ENCODE measurements at regions of chr15 and their contacts with region 1.

Region 1: DNA sequence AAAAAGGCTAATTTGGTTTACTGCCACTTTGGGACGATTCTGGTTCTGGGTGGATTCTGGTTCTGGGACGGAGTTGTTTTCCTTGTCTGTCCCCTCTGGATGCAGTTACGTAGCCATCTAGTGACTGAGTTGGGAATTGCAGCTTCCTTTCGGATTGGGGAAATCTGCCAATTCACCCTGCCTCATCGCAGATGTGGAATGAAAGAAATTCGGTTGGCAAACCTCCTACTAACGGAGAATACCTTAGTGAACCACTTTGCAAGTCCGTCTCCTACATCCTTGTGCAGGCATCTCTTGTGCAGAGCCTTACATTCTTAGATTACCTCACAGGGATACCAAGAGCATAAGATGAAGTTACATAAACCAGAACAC is 31.5 kb upstream of the AP4E1 start:
- DNase-seq: peak; percentile 38 to 74 (median 61)
- ATAC-seq: peak; percentile 72 to 84
- H3K4me3 ChIP-seq: peak overlapping the region; percentile 42
- H3K27ac ChIP-seq: no peak overlapping the region
- H3K4me1 ChIP-seq: no peaks in the 10 kb centered on the region
- H3K27me3 ChIP-seq: no peaks in the 10 kb centered on the region

Region 2: GRCh38 chr15:50627351-50628055 is 249.5 kb before region 1 on chr15:
- intact Hi-C with region 1: no loop called
- DNase-seq: no peak
- ATAC-seq: no peak
- H3K4me3 ChIP-seq: no peak overlapping the region
- H3K27ac ChIP-seq: no peak overlapping the region
- H3K4me1 ChIP-seq: no peaks in the 10 kb centered on the region
- H3K27me3 ChIP-seq: no peaks in the 10 kb centered on the region

Region 3: GRCh38 chr15:50641288-50641687 is 235.7 kb before region 1 on chr15:
- intact Hi-C with region 1: no loop called
- DNase-seq: no peak
- ATAC-seq: no peak
- H3K4me3 ChIP-seq: no peak overlapping the region
- H3K27ac ChIP-seq: no peak overlapping the region
- H3K4me1 ChIP-seq: no peaks in the 10 kb centered on the region
- H3K27me3 ChIP-seq: no peaks in the 10 kb centered on the region

Region 4: GRCh38 chr15:50669611-50670010 is 207.4 kb before region 1 on chr15:
- intact Hi-C with region 1: loop called in 3 of 4 experiments (anchors 2 to 10 kb)
- DNase-seq: no peak
- ATAC-seq: no peak
- H3K4me3 ChIP-seq: no peak overlapping the region
- H3K27ac ChIP-seq: no peak overlapping the region
- H3K4me1 ChIP-seq: peaks cover 1% of the 10 kb centered on the region
- H3K27me3 ChIP-seq: no peaks in the 10 kb centered on the region

Region 5: GRCh38 chr15:50675536-50676144 is 201.3 kb before region 1 on chr15:
- intact Hi-C with region 1: loop called (anchors 2 to 10 kb)
- DNase-seq: no peak
- ATAC-seq: no peak
- H3K4me3 ChIP-seq: no peak overlapping the region
- H3K27ac ChIP-seq: no peak overlapping the region
- H3K4me1 ChIP-seq: peaks cover 3% of the 10 kb centered on the region
- H3K27me3 ChIP-seq: no peaks in the 10 kb centered on the region

Region 6: GRCh38 chr15:50681467-50681866 is 195.5 kb before region 1 on chr15:
- intact Hi-C with region 1: loop called in 3 of 4 experiments (anchors 5 to 10 kb)
- DNase-seq: no peak
- ATAC-seq: no peak
- H3K4me3 ChIP-seq: no peak overlapping the region
- H3K27ac ChIP-seq: no peak overlapping the region
- H3K4me1 ChIP-seq: peaks cover 9% of the 10 kb centered on the region
- H3K27me3 ChIP-seq: no peaks in the 10 kb centered on the region

Region 7: GRCh38 chr15:50765195-50765973 is 111.6 kb before region 1 on chr15 and contains the start of gene SPPL2A:
- intact Hi-C with region 1: loop called in 1 of 4 experiments (anchors 10 kb)
- DNase-seq: peak; percentile 91 to 94 (median 93)
- ATAC-seq: peak; percentile 96 to 97
- H3K4me3 ChIP-seq: peak within 1 kb of the TSS; percentile 63
- H3K27ac ChIP-seq: peak within 1 kb of the TSS; percentile 93
- H3K4me1 ChIP-seq: peaks cover 2% of the 10 kb centered on the region
- H3K27me3 ChIP-seq: no peaks in the 10 kb centered on the region
- total RNA-seq, gene SPPL2A: 110 to 120 (median 116) TPM

Region 8: GRCh38 chr15:50803479-50804180 is 73.3 kb before region 1 on chr15:
- intact Hi-C with region 1: no loop called
- DNase-seq: no peak
- ATAC-seq: no peak
- H3K4me3 ChIP-seq: no peak overlapping the region
- H3K27ac ChIP-seq: no peak overlapping the region
- H3K4me1 ChIP-seq: no peaks in the 10 kb centered on the region
- H3K27me3 ChIP-seq: no peaks in the 10 kb centered on the region

Region 9: GRCh38 chr15:50940506-50940905 is 63.5 kb after region 1 on chr15:
- intact Hi-C with region 1: no loop called
- DNase-seq: no peak
- ATAC-seq: no peak
- H3K4me3 ChIP-seq: no peak overlapping the region
- H3K27ac ChIP-seq: no peak overlapping the region
- H3K4me1 ChIP-seq: no peaks in the 10 kb centered on the region
- H3K27me3 ChIP-seq: no peaks in the 10 kb centered on the region

Measured in right cardiac atrium (tissue), 5 donors.